Ascending aorta (tissue), 2 donors: ENCODE measurements at regions of chr13 and their contacts with region 1.

Region 1: GRCh38 chr13:110108347-110109174 is 198.4 kb downstream of the COL4A1 start:
- DNase-seq: peak in 1 of 2 donors; percentile 88
- H3K4me3 ChIP-seq: no peak overlapping the region
- H3K27ac ChIP-seq: peak overlapping the region; percentile 43 to 44
- H3K4me1 ChIP-seq: peaks cover 0 to 24% of the 10 kb centered on the region in 2 donors
- H3K27me3 ChIP-seq: no peaks in the 10 kb centered on the region
- CTCF ChIP-seq: peak; percentile 69 to 77 (median 69)

Region 2: GRCh38 chr13:108961542-108962125 is 1146.9 kb before region 1 on chr13:
- intact Hi-C with region 1: loop called (anchors 2 kb)
- DNase-seq: no peak
- H3K4me3 ChIP-seq: no peak overlapping the region
- H3K27ac ChIP-seq: no peak overlapping the region
- H3K4me1 ChIP-seq: peaks cover 3 to 10% of the 10 kb centered on the region in 2 donors
- H3K27me3 ChIP-seq: no peaks in the 10 kb centered on the region
- CTCF ChIP-seq: peak; percentile 77 to 91 (median 80)

Region 3: DNA sequence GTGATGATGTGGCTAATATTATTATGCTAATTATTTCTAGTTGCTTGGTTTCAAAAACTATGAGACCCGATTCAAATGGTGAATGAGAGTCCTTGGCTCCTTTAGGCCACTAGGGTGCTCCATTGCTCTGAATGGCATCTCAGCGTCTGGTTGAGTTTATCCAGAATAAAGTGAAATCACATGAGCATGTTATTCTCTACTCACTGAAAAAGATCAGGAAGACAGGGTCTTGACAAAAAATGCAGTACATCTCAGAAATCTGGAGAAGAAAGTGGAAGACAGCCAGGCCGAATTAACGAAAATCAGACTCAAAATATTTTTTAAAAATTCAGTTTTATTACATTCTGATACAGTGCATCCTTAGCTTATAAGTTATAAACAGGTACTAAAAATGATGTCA is 962.9 kb before region 1 on chr13:
- intact Hi-C with region 1: loop called (anchors 1 kb)
- DNase-seq: no peak
- H3K4me3 ChIP-seq: no peak overlapping the region
- H3K27ac ChIP-seq: no peak overlapping the region
- H3K4me1 ChIP-seq: peaks cover 0 to 2% of the 10 kb centered on the region in 2 donors
- H3K27me3 ChIP-seq: peaks cover 2% of the 10 kb centered on the region
- CTCF ChIP-seq: peak; percentile 69 to 86 (median 79)

Region 4: GRCh38 chr13:109256866-109257760 is 851.4 kb before region 1 on chr13:
- intact Hi-C with region 1: loop called (anchors 5 kb)
- DNase-seq: peak in 1 of 2 donors; percentile 80
- H3K4me3 ChIP-seq: no peak overlapping the region
- H3K27ac ChIP-seq: peak overlapping the region; percentile 55 to 56
- H3K4me1 ChIP-seq: peaks cover 3% of the 10 kb centered on the region in 2 donors
- H3K27me3 ChIP-seq: no peaks in the 10 kb centered on the region
- CTCF ChIP-seq: no peak

Region 5: DNA sequence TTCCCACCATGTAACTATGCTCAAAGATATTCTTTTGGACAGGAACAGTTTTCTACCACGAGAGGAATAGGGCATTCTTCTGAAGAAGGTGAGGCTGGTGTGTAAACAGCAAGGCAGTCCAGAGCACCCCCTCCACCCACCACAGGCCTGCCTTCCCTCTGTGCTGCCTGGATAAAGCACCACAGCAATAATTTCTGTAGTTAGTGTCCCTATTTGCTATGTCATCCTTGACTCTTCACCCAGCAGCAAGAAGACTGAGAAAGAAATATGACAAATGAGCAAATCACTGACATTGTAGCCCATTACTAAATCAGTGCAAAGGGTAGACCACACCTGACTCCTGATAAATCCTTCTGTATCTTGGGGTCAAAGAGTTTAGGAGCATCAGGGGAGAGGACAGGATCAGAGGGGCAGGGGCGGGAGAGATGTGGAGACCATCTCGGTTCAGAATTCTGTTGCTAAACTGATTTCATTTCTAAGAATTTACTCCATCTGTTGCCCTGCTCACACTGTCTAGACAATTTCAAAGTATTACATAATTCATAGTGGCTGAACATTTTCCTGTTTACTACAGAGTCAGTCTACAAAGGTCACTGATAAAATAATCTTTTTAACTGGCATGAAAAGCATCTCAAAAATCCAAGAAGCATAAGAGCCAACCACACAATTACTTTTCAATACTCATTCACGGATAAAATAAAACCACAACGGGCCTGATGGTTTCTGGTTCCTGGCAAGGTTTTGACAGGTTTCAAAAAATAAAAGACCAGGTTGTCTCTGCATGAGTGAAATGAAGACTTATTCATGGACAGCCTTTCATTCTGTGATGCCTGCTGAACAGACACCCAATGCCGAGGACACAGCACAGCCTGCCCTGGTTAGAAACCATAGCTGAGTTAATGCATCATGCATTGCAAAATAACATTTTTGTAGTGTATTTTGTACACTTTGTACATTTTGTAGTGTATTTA is 233.8 kb before region 1 on chr13:
- intact Hi-C with region 1: loop called (anchors 2 kb)
- DNase-seq: no peak
- H3K4me3 ChIP-seq: peak overlapping the region; percentile 19 to 22
- H3K27ac ChIP-seq: peak overlapping the region; percentile 85 to 90
- H3K4me1 ChIP-seq: peaks cover 5 to 36% of the 10 kb centered on the region in 2 donors
- H3K27me3 ChIP-seq: no peaks in the 10 kb centered on the region
- CTCF ChIP-seq: no peak

Region 6: DNA sequence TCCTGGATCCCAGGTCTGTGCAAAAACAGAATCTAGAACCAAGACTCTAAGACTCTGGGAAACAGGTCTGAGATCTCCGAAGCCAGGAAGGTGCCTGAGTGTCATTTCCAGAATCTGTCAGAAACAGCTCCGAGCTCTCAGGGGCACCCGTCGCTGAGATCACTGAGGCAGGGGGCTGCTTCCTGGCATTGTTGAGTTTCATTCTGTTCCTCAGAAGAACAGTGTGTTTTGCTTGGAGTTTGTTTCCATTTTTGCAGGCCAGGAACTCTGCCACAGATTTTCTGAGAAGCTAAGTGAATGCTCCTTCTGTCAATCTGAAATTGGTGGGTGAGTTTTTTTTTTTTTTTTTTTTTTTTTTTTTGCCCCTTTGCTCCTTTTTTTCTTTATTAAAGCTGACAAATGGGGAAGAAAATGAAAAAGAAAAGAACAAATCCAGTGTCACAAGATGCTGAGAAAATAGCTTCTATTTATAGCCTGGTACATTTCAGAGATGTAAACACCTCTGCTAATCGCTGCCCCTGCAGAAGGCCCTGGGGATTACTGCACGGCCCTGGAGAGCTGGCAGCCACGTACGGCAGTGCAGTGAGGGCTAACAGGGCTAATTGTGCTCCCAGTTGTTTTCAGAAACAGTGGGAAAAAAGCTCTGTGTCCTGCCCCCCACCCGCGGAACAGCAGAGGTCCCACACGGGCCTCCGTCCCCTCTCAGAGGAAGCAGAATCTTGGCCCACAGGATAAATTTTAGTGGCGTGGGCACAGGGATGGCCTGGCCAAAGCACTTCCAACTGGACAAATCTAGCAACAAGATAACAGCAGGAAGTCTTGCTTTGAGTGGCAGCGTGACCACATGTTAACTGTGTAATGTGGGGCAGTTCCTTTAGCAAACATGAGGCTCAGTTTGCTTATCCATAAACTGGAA is 84.6 kb before region 1 on chr13:
- intact Hi-C with region 1: loop called (anchors 5 kb)
- DNase-seq: peak; percentile 30 to 82
- H3K4me3 ChIP-seq: peak overlapping the region in 1 of 2 donors; percentile 34
- H3K27ac ChIP-seq: peak overlapping the region; percentile 84
- H3K4me1 ChIP-seq: peaks cover 10 to 23% of the 10 kb centered on the region in 2 donors
- H3K27me3 ChIP-seq: no peaks in the 10 kb centered on the region
- CTCF ChIP-seq: no peak

Region 7: GRCh38 chr13:110070511-110071120 is 37.9 kb before region 1 on chr13:
- intact Hi-C with region 1: no loop called
- DNase-seq: no peak
- H3K4me3 ChIP-seq: no peak overlapping the region
- H3K27ac ChIP-seq: no peak overlapping the region
- H3K4me1 ChIP-seq: no peaks in the 10 kb centered on the region
- H3K27me3 ChIP-seq: no peaks in the 10 kb centered on the region
- CTCF ChIP-seq: no peak